Calu3 (cell line): ENCODE measurements at regions of chr4 and their contacts with region 1.

Region 1: DNA sequence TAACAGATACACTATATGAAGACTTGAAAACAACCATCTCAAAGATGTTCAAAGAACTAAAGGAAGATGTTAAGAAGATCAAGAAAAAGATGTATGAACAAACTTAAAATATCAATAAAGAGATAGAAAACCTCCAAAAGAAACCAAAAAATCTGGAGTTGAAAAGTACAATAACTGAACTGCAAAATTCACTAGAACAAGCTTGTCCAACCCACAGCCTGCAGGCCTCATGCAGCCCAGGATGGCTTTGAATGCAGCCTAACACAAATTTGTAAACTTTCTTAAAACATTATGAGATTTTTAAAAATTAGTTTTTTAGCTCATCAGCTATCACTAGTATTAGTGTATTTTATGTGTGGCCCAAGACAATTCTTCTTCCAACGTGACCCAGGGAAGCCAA is 77.0 kb upstream of the DCTD start:
- DNase-seq: no peak
- H3K4me3 Mint-ChIP-seq: no peak overlapping the region
- H3K27ac Mint-ChIP-seq: no peak overlapping the region
- H3K4me1 Mint-ChIP-seq: no peaks in the 10 kb centered on the region
- H3K27me3 Mint-ChIP-seq: peaks cover 16% of the 10 kb centered on the region
- CTCF ChIP-seq: no peak

Region 2: GRCh38 chr4:182448281-182449151 is 545.7 kb before region 1 on chr4:
- CTCF ChIA-PET with region 1: interaction called, 10 read pairs
- intact Hi-C with region 1: no loop called
- DNase-seq: peak; percentile 77
- H3K4me3 Mint-ChIP-seq: peak overlapping the region; percentile 75
- H3K27ac Mint-ChIP-seq: no peak overlapping the region
- H3K4me1 Mint-ChIP-seq: peaks cover 13% of the 10 kb centered on the region
- H3K27me3 Mint-ChIP-seq: peaks cover 14% of the 10 kb centered on the region
- CTCF ChIP-seq: no peak

Region 3: GRCh38 chr4:182843808-182844325 is 150.3 kb before region 1 on chr4:
- CTCF ChIA-PET with region 1: no interaction called
- intact Hi-C with region 1: no loop called
- DNase-seq: no peak
- H3K4me3 Mint-ChIP-seq: no peak overlapping the region
- H3K27ac Mint-ChIP-seq: no peak overlapping the region
- H3K4me1 Mint-ChIP-seq: no peaks in the 10 kb centered on the region
- H3K27me3 Mint-ChIP-seq: peaks cover 47% of the 10 kb centered on the region
- CTCF ChIP-seq: no peak

Region 4: DNA sequence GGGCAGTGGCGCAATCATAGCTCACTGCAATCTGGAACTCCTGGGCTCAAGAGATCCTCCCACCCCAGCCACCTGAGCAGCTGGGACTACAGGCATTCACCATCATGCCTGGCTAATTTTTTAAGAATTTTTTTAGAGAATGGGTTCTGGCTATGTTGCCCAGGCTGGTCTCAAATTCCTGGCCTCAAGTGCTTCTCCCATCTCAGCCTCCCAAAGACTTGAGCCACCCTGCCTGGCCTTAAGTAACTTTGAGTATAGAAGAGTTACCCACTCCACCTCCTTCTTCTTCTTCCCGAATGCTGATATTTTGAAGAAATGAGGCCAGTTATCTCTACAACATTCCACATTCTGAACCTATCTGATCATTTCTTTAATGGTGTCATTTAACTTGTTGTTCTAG is 32.5 kb after region 1 on chr4:
- CTCF ChIA-PET with region 1: no interaction called
- intact Hi-C with region 1: no loop called
- DNase-seq: no peak
- H3K4me3 Mint-ChIP-seq: no peak overlapping the region
- H3K27ac Mint-ChIP-seq: no peak overlapping the region
- H3K4me1 Mint-ChIP-seq: no peaks in the 10 kb centered on the region
- H3K27me3 Mint-ChIP-seq: peaks cover 25% of the 10 kb centered on the region
- CTCF ChIP-seq: no peak

Region 5: DNA sequence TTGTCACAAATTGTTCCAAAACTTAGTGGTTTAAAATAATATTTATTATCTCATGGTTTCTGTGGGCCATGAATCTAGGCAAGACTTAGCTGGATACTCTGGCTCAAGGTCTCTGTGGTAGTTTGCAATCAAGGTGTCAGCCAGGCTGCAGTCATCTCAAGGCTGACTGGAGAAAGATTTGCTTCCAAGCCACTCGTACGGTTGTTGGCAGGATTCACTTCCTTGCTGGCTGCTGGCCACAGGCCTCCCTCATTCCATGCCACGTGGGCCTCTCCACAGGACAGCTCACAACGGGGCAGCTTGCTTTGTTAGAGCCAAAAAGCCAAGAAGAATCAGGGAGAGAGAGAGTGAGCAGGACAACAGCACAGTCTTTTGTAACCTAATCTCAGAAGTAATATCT is 206.3 kb after region 1 on chr4:
- CTCF ChIA-PET with region 1: no interaction called
- intact Hi-C with region 1: no loop called
- DNase-seq: peak; percentile 75
- H3K4me3 Mint-ChIP-seq: no peak overlapping the region
- H3K27ac Mint-ChIP-seq: peak overlapping the region; percentile 54
- H3K4me1 Mint-ChIP-seq: peaks cover 32% of the 10 kb centered on the region
- H3K27me3 Mint-ChIP-seq: no peaks in the 10 kb centered on the region
- CTCF ChIP-seq: no peak